Activated T-helper 1 cell treated with anti-CD3 and anti-CD28 coated beads, Interleukin-12 subunit alpha, Interleukin-12 subunit beta, Interleukin-2, Interleukin-4 antibody, amounts not matched to agents 30 ng/mL and 10 ng/mL and 1 ng/mL, durations not matched to agents 14 hours and 24 hours and 36 hours (primary cell): ENCODE measurements at regions of chr2 and their contacts with region 1.

Region 1: DNA sequence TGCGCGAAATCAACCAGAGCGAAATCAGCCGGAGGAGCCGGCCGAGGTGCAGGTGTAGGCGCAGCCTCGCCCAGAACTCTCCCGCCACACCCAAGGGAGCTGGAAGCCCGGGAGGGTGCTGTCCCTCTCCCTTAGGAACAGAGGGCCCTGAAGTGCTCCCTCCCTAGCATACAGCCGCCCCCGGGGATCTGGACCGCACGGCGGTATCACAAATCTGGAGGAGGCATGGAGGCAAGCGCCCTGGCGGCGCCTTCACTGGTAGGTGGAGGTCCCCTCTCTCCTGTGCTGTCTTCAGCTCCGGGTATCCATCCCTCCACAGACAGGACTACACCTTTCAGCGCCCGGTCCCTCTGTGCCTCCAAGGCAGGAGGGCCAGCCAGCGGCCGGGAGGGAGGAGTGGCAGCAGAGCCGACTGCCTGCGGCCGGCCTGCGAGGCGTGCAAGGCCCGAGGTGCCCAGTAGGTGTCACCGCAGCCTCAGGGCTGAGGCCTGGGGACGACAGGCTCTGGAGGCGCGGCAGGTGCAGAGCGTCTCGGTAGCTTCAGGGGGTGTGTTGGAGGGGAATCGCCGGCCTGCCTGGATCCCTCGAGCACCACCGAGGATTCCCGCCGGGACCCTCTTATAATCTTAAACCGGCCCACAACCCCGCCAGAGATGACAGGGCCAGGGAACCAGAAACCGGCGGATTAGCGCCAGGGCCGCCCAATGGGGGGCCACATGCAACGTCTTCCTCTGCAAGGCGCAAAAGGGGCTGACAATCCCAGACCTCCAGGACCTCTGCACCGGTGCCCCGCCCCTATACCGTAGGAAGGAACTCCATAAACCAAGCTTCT is 2.8 kb downstream of the IHH start:
- DNase-seq: peak; percentile 68
- H3K4me3 Mint-ChIP-seq: peak overlapping the region; percentile 30
- H3K27ac Mint-ChIP-seq: no peak overlapping the region
- H3K4me1 Mint-ChIP-seq: no peaks in the 10 kb centered on the region
- H3K27me3 Mint-ChIP-seq: peaks cover 60% of the 10 kb centered on the region

Region 2: GRCh38 chr2:218788529-218789255 is 269.2 kb before region 1 on chr2:
- intact Hi-C with region 1: no loop called
- DNase-seq: no peak
- H3K4me3 Mint-ChIP-seq: no peak overlapping the region
- H3K27ac Mint-ChIP-seq: no peak overlapping the region
- H3K4me1 Mint-ChIP-seq: no peaks in the 10 kb centered on the region
- H3K27me3 Mint-ChIP-seq: peaks cover 42% of the 10 kb centered on the region

Region 3: GRCh38 chr2:218861645-218862318 is 196.1 kb before region 1 on chr2:
- intact Hi-C with region 1: loop called (anchors 2 kb)
- DNase-seq: no peak
- H3K4me3 Mint-ChIP-seq: no peak overlapping the region
- H3K27ac Mint-ChIP-seq: no peak overlapping the region
- H3K4me1 Mint-ChIP-seq: no peaks in the 10 kb centered on the region
- H3K27me3 Mint-ChIP-seq: peaks cover 67% of the 10 kb centered on the region

Region 4: GRCh38 chr2:219002395-219003266 is 55.3 kb before region 1 on chr2:
- intact Hi-C with region 1: loop called (anchors 5 kb)
- DNase-seq: no peak
- H3K4me3 Mint-ChIP-seq: no peak overlapping the region
- H3K27ac Mint-ChIP-seq: no peak overlapping the region
- H3K4me1 Mint-ChIP-seq: no peaks in the 10 kb centered on the region
- H3K27me3 Mint-ChIP-seq: peaks cover 53% of the 10 kb centered on the region

Region 5: GRCh38 chr2:219119422-219120043 is 61.6 kb after region 1 on chr2:
- intact Hi-C with region 1: loop called (anchors 1 kb)
- DNase-seq: peak; percentile 31
- H3K4me3 Mint-ChIP-seq: no peak overlapping the region
- H3K27ac Mint-ChIP-seq: no peak overlapping the region
- H3K4me1 Mint-ChIP-seq: peaks cover 8% of the 10 kb centered on the region
- H3K27me3 Mint-ChIP-seq: no peaks in the 10 kb centered on the region

Region 6: GRCh38 chr2:219352448-219353023 is 294.6 kb after region 1 on chr2:
- intact Hi-C with region 1: loop called (anchors 2 kb)
- DNase-seq: peak; percentile 30
- H3K4me3 Mint-ChIP-seq: no peak overlapping the region
- H3K27ac Mint-ChIP-seq: no peak overlapping the region
- H3K4me1 Mint-ChIP-seq: no peaks in the 10 kb centered on the region
- H3K27me3 Mint-ChIP-seq: peaks cover 37% of the 10 kb centered on the region